Activated CD4-positive, alpha-beta T cell treated with anti-CD3 and anti-CD28 coated beads for 36 hours (primary cell): ENCODE measurements at regions of chr11 and their contacts with region 1.

Region 1: DNA sequence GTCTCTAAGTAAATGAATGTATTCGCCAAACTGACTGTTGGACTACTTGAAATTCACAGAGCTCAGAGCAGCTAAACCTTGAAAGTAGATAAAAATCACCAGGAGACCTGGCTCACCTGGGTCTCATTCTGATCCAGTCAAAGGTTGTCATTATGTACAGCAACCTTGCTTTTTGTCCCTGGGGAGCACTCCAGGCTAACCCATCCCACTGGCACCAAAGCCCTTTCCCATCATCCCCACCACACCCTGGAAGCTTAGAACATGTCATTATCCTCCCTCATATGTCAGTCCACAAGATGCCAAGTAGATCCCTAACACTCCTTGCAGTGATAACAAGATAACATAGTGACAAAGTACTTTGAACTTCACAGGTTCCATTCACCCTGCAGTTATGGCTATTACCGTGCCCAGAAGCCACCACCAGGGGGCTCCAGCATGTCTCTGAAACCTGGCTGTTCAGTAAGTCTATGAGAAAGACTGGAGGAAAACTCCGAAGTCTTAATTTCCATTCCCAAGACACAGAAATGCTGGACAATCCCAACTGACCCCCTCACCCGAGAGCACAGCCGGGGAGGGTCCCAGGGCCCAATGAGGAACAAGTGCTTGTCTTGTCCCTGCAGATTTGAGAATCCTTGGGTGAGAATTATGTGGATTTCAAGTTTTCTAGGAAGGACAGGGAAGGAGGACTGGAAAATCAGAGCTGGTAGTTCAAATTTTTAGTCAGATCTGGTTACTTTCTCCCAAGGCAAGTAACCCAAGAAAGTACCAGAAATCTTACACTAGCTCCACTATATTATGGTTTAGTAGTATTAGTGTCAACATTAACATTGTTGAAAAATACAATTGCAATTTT is 43.0 kb upstream of the USP47 start:
- DNase-seq: peak; percentile 89
- ATAC-seq: peak; percentile 93
- H3K4me3 Mint-ChIP-seq: no peak overlapping the region
- H3K27ac Mint-ChIP-seq: no peak overlapping the region
- H3K4me1 Mint-ChIP-seq: no peaks in the 10 kb centered on the region
- H3K27me3 Mint-ChIP-seq: peaks cover 21% of the 10 kb centered on the region

Region 2: GRCh38 chr11:11848891-11849746 is 50.3 kb after region 1 on chr11:
- CTCF ChIA-PET with region 1: interaction called, 13 read pairs
- POLR2A ChIA-PET with region 1: interaction called, 11 read pairs
- intact Hi-C with region 1: loop called (anchors 1 kb)
- DNase-seq: peak; percentile 81
- ATAC-seq: peak; percentile 80
- H3K4me3 Mint-ChIP-seq: peak overlapping the region; percentile 31
- H3K27ac Mint-ChIP-seq: peak overlapping the region; percentile 51
- H3K4me1 Mint-ChIP-seq: peaks cover 84% of the 10 kb centered on the region
- H3K27me3 Mint-ChIP-seq: no peaks in the 10 kb centered on the region

Region 3: GRCh38 chr11:11895672-11896071 is 96.9 kb after region 1 on chr11:
- CTCF ChIA-PET with region 1: interaction called, 6 read pairs
- POLR2A ChIA-PET with region 1: no interaction called
- intact Hi-C with region 1: loop called in 1 of 2 experiments (anchors 5 kb)
- DNase-seq: no peak
- ATAC-seq: no peak
- H3K4me3 Mint-ChIP-seq: no peak overlapping the region
- H3K27ac Mint-ChIP-seq: no peak overlapping the region
- H3K4me1 Mint-ChIP-seq: peaks cover 5% of the 10 kb centered on the region
- H3K27me3 Mint-ChIP-seq: no peaks in the 10 kb centered on the region

Region 4: DNA sequence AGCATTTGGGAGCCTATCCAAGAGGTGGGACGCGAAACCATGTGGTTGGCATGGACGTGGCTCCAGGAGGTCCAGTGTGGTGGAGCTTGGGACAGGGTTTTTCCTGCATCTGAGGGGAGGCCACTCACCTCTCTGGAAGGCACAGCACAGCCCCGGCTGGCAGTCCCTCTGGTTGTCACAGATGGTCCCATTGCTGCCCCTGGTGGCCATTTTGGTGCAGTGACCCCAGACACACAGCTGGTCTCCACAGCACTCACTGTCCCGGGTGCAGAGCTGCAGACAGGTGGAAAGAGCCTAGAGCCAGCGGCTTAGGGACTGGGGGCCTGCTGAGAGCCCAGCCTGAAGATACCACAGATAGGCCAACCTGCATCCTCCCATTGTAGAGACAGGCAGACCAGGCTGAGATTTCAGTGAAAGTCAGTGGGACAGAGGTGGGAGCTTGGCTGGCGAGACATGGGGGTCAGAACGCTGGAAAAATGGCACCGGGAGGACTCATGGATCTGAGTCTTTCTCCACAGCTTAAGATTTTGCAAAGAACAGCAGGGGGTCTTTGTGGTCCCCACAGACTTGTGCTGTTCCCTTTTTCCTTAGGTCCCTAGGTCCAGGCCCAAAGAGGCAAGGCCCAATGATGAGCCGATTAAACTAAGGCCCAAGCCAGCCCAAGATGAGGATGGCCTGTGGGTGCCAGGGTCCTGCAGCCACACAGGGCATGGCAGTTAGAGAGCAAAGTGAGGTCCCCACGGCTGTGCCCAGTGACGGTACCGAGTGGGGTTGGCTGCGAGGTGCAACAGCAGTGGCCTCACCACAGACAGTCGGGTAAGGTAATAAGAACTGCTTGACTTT is 168.2 kb after region 1 on chr11:
- CTCF ChIA-PET with region 1: interaction called, 9 read pairs
- POLR2A ChIA-PET with region 1: no interaction called
- intact Hi-C with region 1: loop called (anchors 1 to 2 kb)
- DNase-seq: peak; percentile 86
- ATAC-seq: peak; percentile 98
- H3K4me3 Mint-ChIP-seq: no peak overlapping the region
- H3K27ac Mint-ChIP-seq: no peak overlapping the region
- H3K4me1 Mint-ChIP-seq: peaks cover 4% of the 10 kb centered on the region
- H3K27me3 Mint-ChIP-seq: peaks cover 2% of the 10 kb centered on the region

Region 5: DNA sequence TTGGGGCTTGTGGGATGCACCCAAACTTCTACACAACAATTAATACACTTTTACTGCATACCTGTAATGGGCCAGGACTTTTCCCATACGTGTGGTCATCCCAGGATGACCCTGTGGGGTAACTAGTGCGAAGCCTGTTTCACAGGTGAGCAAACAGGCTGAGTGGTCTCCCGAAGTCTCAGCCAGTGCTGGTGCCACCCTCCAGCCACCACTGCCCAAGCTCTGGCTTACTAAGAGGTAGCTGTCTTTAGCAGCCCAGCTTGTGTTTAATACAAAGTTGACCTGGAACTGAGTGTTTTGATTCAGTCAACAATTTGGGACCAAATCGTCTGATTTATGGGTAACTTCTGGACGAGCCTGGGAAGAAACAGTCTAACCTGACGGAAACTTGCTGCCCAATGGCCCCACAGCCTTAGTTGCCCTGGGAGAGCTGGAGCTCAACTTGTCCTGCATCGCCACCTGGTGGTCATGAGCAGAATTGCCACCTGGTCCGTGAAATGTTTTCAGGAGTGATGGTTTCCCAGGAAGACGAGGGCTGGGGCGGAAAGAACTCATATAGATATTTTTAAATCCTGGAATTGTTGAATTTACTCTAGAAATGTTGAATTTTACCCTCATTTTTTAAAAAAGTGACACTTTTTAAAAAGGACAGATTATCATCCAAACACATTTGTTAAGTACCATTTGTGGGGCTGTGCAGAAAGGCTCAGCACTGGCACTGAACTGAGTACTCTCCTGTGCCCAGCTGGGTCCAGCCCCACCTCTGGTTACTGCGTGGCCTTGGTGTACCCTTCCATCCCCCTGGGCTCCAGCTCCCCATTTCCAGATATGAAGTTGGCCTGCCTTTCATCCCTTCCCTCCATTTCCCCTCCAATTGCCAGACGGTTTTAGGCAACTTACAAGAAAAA is 483.0 kb after region 1 on chr11:
- CTCF ChIA-PET with region 1: interaction called, 6 read pairs
- POLR2A ChIA-PET with region 1: no interaction called
- intact Hi-C with region 1: loop called (anchors 2 to 5 kb)
- DNase-seq: peak; percentile 89
- ATAC-seq: peak; percentile 76
- H3K4me3 Mint-ChIP-seq: no peak overlapping the region
- H3K27ac Mint-ChIP-seq: peak overlapping the region; percentile 14
- H3K4me1 Mint-ChIP-seq: peaks cover 18% of the 10 kb centered on the region
- H3K27me3 Mint-ChIP-seq: no peaks in the 10 kb centered on the region